ENCODE measurements at regions of chr4 and their contacts with region 1.

Region 1: GRCh38 chr4:78517050-78517652 is 34.4 kb upstream of the ANXA3 start:
- DNase-seq: no peak
- ATAC-seq: no peak

Region 2: GRCh38 chr4:77959566-77960338 is 557.4 kb before region 1 on chr4:
- intact Hi-C with region 1: loop called in 1 of 2 experiments (anchors 10 kb)
- DNase-seq: no peak
- ATAC-seq: peak; percentile 50

Region 3: GRCh38 chr4:78056265-78057129 is 460.7 kb before region 1 on chr4:
- intact Hi-C with region 1: loop called in 1 of 2 experiments (anchors 10 kb)
- DNase-seq: peak; percentile 74 to 75
- ATAC-seq: peak; percentile 52

Region 4: GRCh38 chr4:78809928-78810835 is 293.0 kb after region 1 on chr4:
- intact Hi-C with region 1: no loop called
- DNase-seq: no peak
- ATAC-seq: no peak